ENCODE measurements at regions of chr4 and their contacts with region 1.

Region 1: DNA sequence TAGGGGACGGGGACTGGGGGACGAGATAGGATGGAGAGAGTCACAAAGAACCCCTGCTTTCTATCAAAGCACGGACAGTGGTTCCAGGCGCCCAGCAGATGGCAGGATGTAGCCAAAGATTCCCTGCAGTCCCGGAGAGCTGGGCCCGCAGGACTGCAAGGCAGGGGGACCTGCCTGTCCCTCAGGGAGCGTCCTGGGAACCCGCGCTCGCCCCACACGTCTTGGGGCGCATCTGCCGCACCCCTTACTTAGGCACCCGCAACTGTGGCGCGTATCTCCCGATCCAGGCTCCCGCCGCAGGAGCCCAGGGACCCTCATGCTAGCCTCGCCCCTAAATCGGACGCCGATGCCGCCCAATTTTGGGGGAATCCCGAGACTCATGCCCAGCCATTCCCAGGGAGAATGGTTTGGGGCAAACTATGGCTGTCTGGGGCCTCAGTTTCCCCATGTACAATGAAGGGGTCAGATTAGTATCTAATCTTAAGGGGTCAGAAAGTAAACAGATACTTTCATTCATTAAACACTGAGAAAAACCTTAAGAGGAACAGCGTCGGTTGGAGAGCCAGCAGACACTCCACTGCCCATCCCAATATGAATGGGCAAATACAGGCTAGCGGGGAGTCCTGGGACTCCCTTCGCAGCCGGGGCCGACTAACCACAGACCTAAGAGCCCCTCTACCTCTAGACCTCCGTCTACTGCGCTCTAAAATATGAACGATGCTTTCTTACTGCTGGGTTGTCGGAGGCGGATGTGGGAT is 581 bp upstream of the STK32B start:
- DNase-seq: peak; percentile 34
- ATAC-seq: peak; percentile 97
- H3K4me3 ChIP-seq: no peak overlapping the region
- H3K27ac ChIP-seq: no peak overlapping the region
- H3K4me1 ChIP-seq: no peaks in the 10 kb centered on the region
- H3K27me3 ChIP-seq: peaks cover 8% of the 10 kb centered on the region; the same call in 1 of the 2 replicates
- CTCF ChIP-seq: peak; percentile 53 to 74 (median 67); a peak in 5 of 6 replicates
- POLR2A ChIP-seq: no peak
- RAD21 ChIP-seq: peak; percentile 77

Region 2: DNA sequence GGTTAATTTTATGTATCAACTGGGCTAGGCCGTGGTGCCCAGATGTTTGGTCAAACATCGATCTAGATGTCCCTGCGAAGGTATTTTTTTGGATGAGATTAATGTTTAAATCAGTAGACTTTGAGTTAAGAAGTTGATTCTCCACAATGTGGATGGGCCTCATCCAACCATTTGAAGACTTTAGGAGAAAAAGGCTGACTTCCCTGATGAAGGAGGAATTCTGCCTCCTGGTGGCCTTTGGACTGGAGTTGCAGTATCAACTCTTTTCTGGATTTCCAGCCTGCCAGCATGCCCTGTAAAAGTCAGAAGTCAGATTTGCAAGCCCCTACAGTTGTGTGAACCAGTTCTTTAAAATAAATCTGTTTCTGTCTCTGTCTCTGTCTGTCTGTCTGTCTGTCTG is 92.0 kb after region 1 on chr4:
- CTCF ChIA-PET with region 1: no interaction called
- POLR2A ChIA-PET with region 1: no interaction called
- RAD21 ChIA-PET with region 1: no interaction called
- intact Hi-C with region 1: loop called (anchors 1 kb)
- DNase-seq: peak; percentile 16
- ATAC-seq: peak; percentile 60
- H3K4me3 ChIP-seq: no peak overlapping the region
- H3K27ac ChIP-seq: no peak overlapping the region
- H3K4me1 ChIP-seq: no peaks in the 10 kb centered on the region
- H3K27me3 ChIP-seq: peaks cover 31% of the 10 kb centered on the region
- CTCF ChIP-seq: peak; percentile 47 to 63 (median 57); a peak in 5 of 6 replicates
- POLR2A ChIP-seq: no peak
- RAD21 ChIP-seq: peak; percentile 58

Region 3: GRCh38 chr4:5378002-5378401 is 327.3 kb after region 1 on chr4:
- CTCF ChIA-PET with region 1: no interaction called
- POLR2A ChIA-PET with region 1: no interaction called
- RAD21 ChIA-PET with region 1: no interaction called
- intact Hi-C with region 1: loop called (anchors 1 kb)
- DNase-seq: peak; percentile 13
- ATAC-seq: peak; percentile 72
- H3K4me3 ChIP-seq: no peak overlapping the region
- H3K27ac ChIP-seq: no peak overlapping the region
- H3K4me1 ChIP-seq: no peaks in the 10 kb centered on the region
- H3K27me3 ChIP-seq: peaks cover 15% of the 10 kb centered on the region; the same call in 1 of the 2 replicates
- CTCF ChIP-seq: peak; percentile 48 to 61 (median 53); a peak in 5 of 6 replicates
- POLR2A ChIP-seq: no peak
- RAD21 ChIP-seq: peak; percentile 70

Region 4: DNA sequence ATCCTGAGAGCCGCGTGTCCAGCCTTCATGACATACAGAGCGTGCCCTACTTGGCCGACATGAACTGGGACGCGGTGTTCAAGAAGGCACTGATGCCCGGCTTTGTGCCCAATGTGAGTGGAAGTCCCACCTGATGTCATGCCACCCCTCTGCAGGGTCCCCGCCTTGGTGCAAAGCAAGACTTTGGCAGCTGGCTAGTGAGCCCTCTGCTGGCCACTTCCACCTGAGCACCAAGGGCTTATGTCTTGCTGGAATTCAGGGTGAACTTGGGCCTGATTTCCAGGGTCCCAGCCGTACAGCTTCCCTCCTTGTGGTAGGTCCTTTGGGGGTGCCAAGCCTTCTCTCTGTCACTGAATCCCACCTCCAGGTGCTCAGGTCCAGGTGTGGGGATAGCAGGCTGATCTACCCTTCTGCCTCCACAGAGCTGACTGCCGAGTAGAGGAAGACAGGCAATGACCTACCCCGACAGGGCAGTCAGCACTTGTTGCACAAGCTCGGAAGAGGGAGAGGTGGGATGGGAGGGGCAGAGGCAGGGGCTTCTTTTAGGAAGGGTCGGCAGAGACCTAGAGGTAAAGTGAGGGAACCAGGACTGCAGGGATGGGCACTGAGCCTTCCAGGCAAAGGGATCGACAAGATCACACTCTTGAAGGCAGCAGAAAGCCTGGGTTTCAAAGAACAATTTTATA is 409.6 kb after region 1 on chr4:
- CTCF ChIA-PET with region 1: interaction called, 3 read pairs
- POLR2A ChIA-PET with region 1: no interaction called
- RAD21 ChIA-PET with region 1: interaction called in 1 of 2 experiments, 3 read pairs
- intact Hi-C with region 1: loop called (anchors 2 kb)
- DNase-seq: peak; percentile 4
- ATAC-seq: peak; percentile 80
- H3K4me3 ChIP-seq: no peak overlapping the region
- H3K27ac ChIP-seq: no peak overlapping the region
- H3K4me1 ChIP-seq: no peaks in the 10 kb centered on the region
- H3K27me3 ChIP-seq: peaks cover 29% of the 10 kb centered on the region; the same call in 1 of the 2 replicates
- CTCF ChIP-seq: peak; percentile 22 to 74 (median 72); a peak in 4 of 6 replicates
- POLR2A ChIP-seq: no peak
- RAD21 ChIP-seq: peak; percentile 48

Region 5: DNA sequence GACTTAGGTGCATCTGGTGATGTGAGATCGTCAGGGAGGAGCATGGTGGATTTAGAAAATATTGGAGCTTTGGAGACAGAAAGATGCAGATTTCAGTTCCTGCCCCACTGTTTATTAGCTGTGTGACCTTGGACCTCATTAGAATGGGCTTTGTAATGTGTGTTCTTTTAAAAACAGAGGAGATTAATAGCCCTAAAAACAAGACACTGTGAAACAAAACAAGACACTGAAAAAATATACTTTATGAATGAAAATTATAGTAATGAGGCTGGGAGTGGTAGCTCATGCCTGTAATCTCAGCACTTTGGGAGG is 739.8 kb after region 1 on chr4:
- CTCF ChIA-PET with region 1: no interaction called
- POLR2A ChIA-PET with region 1: no interaction called
- RAD21 ChIA-PET with region 1: interaction called in 1 of 2 experiments, 3 read pairs
- intact Hi-C with region 1: loop called (anchors 1 kb)
- DNase-seq: no peak
- ATAC-seq: no peak
- H3K4me3 ChIP-seq: no peak overlapping the region
- H3K27ac ChIP-seq: no peak overlapping the region
- H3K4me1 ChIP-seq: no peaks in the 10 kb centered on the region
- H3K27me3 ChIP-seq: peaks cover 8% of the 10 kb centered on the region; the same call in 1 of the 2 replicates
- CTCF ChIP-seq: no peak
- POLR2A ChIP-seq: no peak
- RAD21 ChIP-seq: no peak

Region 6: GRCh38 chr4:5812506-5813229 is 762.0 kb after region 1 on chr4:
- CTCF ChIA-PET with region 1: interaction called, 4 read pairs
- POLR2A ChIA-PET with region 1: no interaction called
- RAD21 ChIA-PET with region 1: no interaction called
- intact Hi-C with region 1: loop called (anchors 2 kb)
- DNase-seq: peak; percentile 62
- ATAC-seq: peak; percentile 95
- H3K4me3 ChIP-seq: no peak overlapping the region
- H3K27ac ChIP-seq: no peak overlapping the region
- H3K4me1 ChIP-seq: no peaks in the 10 kb centered on the region
- H3K27me3 ChIP-seq: no peaks in the 10 kb centered on the region
- CTCF ChIP-seq: peak; percentile 74 to 81 (median 78)
- POLR2A ChIP-seq: no peak
- RAD21 ChIP-seq: peak; percentile 87